CD4-positive, alpha-beta T cell (primary cell): ENCODE measurements at regions of chr13 and their contacts with region 1.

Region 1: GRCh38 chr13:99614385-99614885 is 113.2 kb downstream of the TM9SF2 start:
- DNase-seq: peak in 13 of 14 experiments; percentile 7 to 67 (median 18)
- ATAC-seq: peak; percentile 86
- H3K4me3 ChIP-seq: no peak overlapping the region
- H3K4me3 Mint-ChIP-seq: no peak overlapping the region
- H3K27ac ChIP-seq: no peak overlapping the region
- H3K27ac Mint-ChIP-seq: no peak overlapping the region
- H3K4me1 ChIP-seq: peaks cover 8% of the 10 kb centered on the region
- H3K4me1 Mint-ChIP-seq: peaks cover 64% of the 10 kb centered on the region
- H3K27me3 ChIP-seq: no peaks in the 10 kb centered on the region
- H3K27me3 Mint-ChIP-seq: no peaks in the 10 kb centered on the region
- CTCF ChIP-seq: peak; percentile 34

Region 2: GRCh38 chr13:99176309-99177276 is 437.8 kb before region 1 on chr13:
- CTCF ChIA-PET with region 1: no interaction called
- POLR2A ChIA-PET with region 1: no interaction called
- intact Hi-C with region 1: loop called in 1 of 2 experiments (anchors 5 kb)
- DNase-seq: peak; percentile 64 to 89 (median 74)
- ATAC-seq: peak; percentile 93
- H3K4me3 ChIP-seq: peak overlapping the region; percentile 16
- H3K4me3 Mint-ChIP-seq: peak overlapping the region; percentile 42
- H3K27ac ChIP-seq: no peak overlapping the region
- H3K27ac Mint-ChIP-seq: peak overlapping the region; percentile 76
- H3K4me1 ChIP-seq: peaks cover 41% of the 10 kb centered on the region
- H3K4me1 Mint-ChIP-seq: peaks cover 40% of the 10 kb centered on the region
- H3K27me3 ChIP-seq: no peaks in the 10 kb centered on the region
- H3K27me3 Mint-ChIP-seq: no peaks in the 10 kb centered on the region
- CTCF ChIP-seq: peak; percentile 94

Region 3: GRCh38 chr13:99528547-99528946 is 85.9 kb before region 1 on chr13:
- CTCF ChIA-PET with region 1: no interaction called
- POLR2A ChIA-PET with region 1: no interaction called
- intact Hi-C with region 1: loop called in 1 of 2 experiments (anchors 5 kb)
- DNase-seq: peak in 12 of 14 experiments; percentile 10 to 68 (median 30)
- ATAC-seq: peak; percentile 74
- H3K4me3 ChIP-seq: no peak overlapping the region
- H3K4me3 Mint-ChIP-seq: no peak overlapping the region
- H3K27ac ChIP-seq: no peak overlapping the region
- H3K27ac Mint-ChIP-seq: no peak overlapping the region
- H3K4me1 ChIP-seq: peaks cover 24% of the 10 kb centered on the region
- H3K4me1 Mint-ChIP-seq: peaks cover 62% of the 10 kb centered on the region
- H3K27me3 ChIP-seq: no peaks in the 10 kb centered on the region
- H3K27me3 Mint-ChIP-seq: no peaks in the 10 kb centered on the region
- CTCF ChIP-seq: peak; percentile 63

Region 4: GRCh38 chr13:99577934-99578917 is 36.2 kb before region 1 on chr13:
- CTCF ChIA-PET with region 1: no interaction called
- POLR2A ChIA-PET with region 1: no interaction called
- intact Hi-C with region 1: loop called in 1 of 2 experiments (anchors 5 kb)
- DNase-seq: peak in 1 of 14 experiments; percentile 10
- ATAC-seq: no peak
- H3K4me3 ChIP-seq: no peak overlapping the region
- H3K4me3 Mint-ChIP-seq: no peak overlapping the region
- H3K27ac ChIP-seq: no peak overlapping the region
- H3K27ac Mint-ChIP-seq: no peak overlapping the region
- H3K4me1 ChIP-seq: peaks cover 6% of the 10 kb centered on the region
- H3K4me1 Mint-ChIP-seq: peaks cover 7% of the 10 kb centered on the region
- H3K27me3 ChIP-seq: no peaks in the 10 kb centered on the region
- H3K27me3 Mint-ChIP-seq: no peaks in the 10 kb centered on the region
- CTCF ChIP-seq: no peak

Region 5: GRCh38 chr13:99796175-99796819 is 181.9 kb after region 1 on chr13:
- CTCF ChIA-PET with region 1: no interaction called
- POLR2A ChIA-PET with region 1: no interaction called
- intact Hi-C with region 1: no loop called
- DNase-seq: peak in 5 of 14 experiments; percentile 4 to 35 (median 21)
- ATAC-seq: no peak
- H3K4me3 ChIP-seq: no peak overlapping the region
- H3K4me3 Mint-ChIP-seq: no peak overlapping the region
- H3K27ac ChIP-seq: no peak overlapping the region
- H3K27ac Mint-ChIP-seq: no peak overlapping the region
- H3K4me1 ChIP-seq: no peaks in the 10 kb centered on the region
- H3K4me1 Mint-ChIP-seq: no peaks in the 10 kb centered on the region
- H3K27me3 ChIP-seq: no peaks in the 10 kb centered on the region
- H3K27me3 Mint-ChIP-seq: no peaks in the 10 kb centered on the region
- CTCF ChIP-seq: no peak